Panc1 (cell line): ENCODE measurements at regions of chr3 and their contacts with region 1.

Region 1: GRCh38 chr3:113912552-113913236 is 35.1 kb upstream of the ZDHHC23 start:
- DNase-seq: peak; percentile 69
- ATAC-seq: peak; percentile 95
- H3K4me3 ChIP-seq: no peak overlapping the region
- H3K27ac ChIP-seq: no peak overlapping the region
- H3K4me1 ChIP-seq: no peaks in the 10 kb centered on the region
- H3K27me3 ChIP-seq: no peaks in the 10 kb centered on the region; the same call in 1 of the 2 replicates
- CTCF ChIP-seq: peak; percentile 80

Region 2: GRCh38 chr3:113838631-113839209 is 74.0 kb before region 1 on chr3 and contains the start of gene GRAMD1C:
- CTCF ChIA-PET with region 1: interaction called, 6 read pairs
- POLR2A ChIA-PET with region 1: no interaction called
- in situ Hi-C with region 1: no loop called
- intact Hi-C with region 1: loop called (anchors 2 kb)
- DNase-seq: no peak
- ATAC-seq: peak; percentile 98
- H3K4me3 ChIP-seq: peak within 1 kb of the TSS; percentile 65 to 93
- H3K27ac ChIP-seq: peak within 1 kb of the TSS; percentile 84
- H3K4me1 ChIP-seq: no peaks in the 10 kb centered on the region
- H3K27me3 ChIP-seq: no peaks in the 10 kb centered on the region
- CTCF ChIP-seq: peak; percentile 98
- total RNA-seq, gene GRAMD1C: 3.9 TPM

Region 3: GRCh38 chr3:113844622-113845222 is 68.0 kb before region 1 on chr3:
- CTCF ChIA-PET with region 1: interaction called, 6 read pairs
- POLR2A ChIA-PET with region 1: interaction called, 9 read pairs
- in situ Hi-C with region 1: no loop called
- intact Hi-C with region 1: loop called (anchors 1 kb)
- DNase-seq: no peak
- ATAC-seq: peak; percentile 68; the same call in 1 of the 2 replicates
- H3K4me3 ChIP-seq: no peak overlapping the region
- H3K27ac ChIP-seq: no peak overlapping the region
- H3K4me1 ChIP-seq: no peaks in the 10 kb centered on the region
- H3K27me3 ChIP-seq: no peaks in the 10 kb centered on the region
- CTCF ChIP-seq: peak; percentile 78; the same call in 1 of the 2 replicates

Region 4: GRCh38 chr3:113897373-113897777 is 15.3 kb before region 1 on chr3:
- CTCF ChIA-PET with region 1: no interaction called
- POLR2A ChIA-PET with region 1: no interaction called
- in situ Hi-C with region 1: no loop called
- intact Hi-C with region 1: no loop called
- DNase-seq: no peak
- ATAC-seq: no peak
- H3K4me3 ChIP-seq: no peak overlapping the region; a peak in 1 of 4 replicates
- H3K27ac ChIP-seq: no peak overlapping the region
- H3K4me1 ChIP-seq: no peaks in the 10 kb centered on the region
- H3K27me3 ChIP-seq: no peaks in the 10 kb centered on the region
- CTCF ChIP-seq: no peak

Region 5: GRCh38 chr3:113927556-113927955 is 14.9 kb after region 1 on chr3:
- CTCF ChIA-PET with region 1: no interaction called
- POLR2A ChIA-PET with region 1: interaction called, 14 read pairs
- in situ Hi-C with region 1: no loop called
- intact Hi-C with region 1: no loop called
- DNase-seq: no peak
- ATAC-seq: no peak
- H3K4me3 ChIP-seq: no peak overlapping the region
- H3K27ac ChIP-seq: no peak overlapping the region
- H3K4me1 ChIP-seq: no peaks in the 10 kb centered on the region
- H3K27me3 ChIP-seq: peaks cover 2% of the 10 kb centered on the region; the same call in 1 of the 2 replicates
- CTCF ChIP-seq: no peak

Region 6: GRCh38 chr3:114079761-114080160 is 167.1 kb after region 1 on chr3:
- CTCF ChIA-PET with region 1: no interaction called
- POLR2A ChIA-PET with region 1: no interaction called
- in situ Hi-C with region 1: no loop called
- intact Hi-C with region 1: no loop called
- DNase-seq: no peak
- ATAC-seq: no peak
- H3K4me3 ChIP-seq: no peak overlapping the region
- H3K27ac ChIP-seq: no peak overlapping the region
- H3K4me1 ChIP-seq: no peaks in the 10 kb centered on the region
- H3K27me3 ChIP-seq: no peaks in the 10 kb centered on the region
- CTCF ChIP-seq: no peak